ENCODE measurements at regions of chr4 and their contacts with region 1.

Region 1: DNA sequence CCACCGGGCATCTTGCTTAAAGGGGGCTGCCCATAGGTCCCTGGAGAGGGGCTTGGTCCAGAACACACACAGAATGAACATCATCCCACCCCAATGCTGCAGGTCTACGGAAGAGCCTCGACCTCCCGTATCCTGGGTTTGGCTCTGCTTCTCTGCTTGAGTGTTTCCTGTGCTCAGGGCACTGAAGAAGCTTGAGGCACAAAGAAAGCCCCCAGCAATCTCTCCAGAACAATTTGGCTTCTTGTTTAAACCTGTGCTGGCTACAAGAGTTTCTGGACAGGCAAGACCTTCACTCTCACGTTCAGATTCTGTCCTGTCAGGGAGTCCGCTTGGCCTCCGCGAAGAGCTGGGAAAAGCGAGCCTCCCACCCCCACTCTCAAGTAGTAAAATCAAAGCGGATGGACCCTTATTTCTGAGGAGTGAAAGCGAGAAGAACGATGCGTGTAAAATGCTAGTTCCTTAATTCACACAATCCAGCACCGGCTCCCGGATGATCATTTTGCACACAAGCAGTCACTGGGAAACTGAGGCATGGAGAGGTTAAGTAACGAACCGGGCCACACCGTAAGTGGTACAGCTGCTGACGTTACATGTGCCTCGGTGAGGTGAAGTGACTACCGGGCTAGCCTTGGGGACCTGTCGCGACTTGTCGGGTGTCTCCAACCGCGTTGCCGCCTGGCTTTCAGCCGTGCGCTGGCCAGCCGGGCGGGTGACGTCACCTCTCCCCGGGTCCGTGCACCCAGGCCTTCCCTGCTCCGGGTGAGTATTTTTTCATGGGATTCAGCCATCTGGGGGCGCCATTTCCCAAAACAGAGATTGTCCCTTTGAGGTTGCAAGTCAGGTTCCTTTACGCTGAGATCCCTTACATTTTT is 3.1 kb upstream of the SFRP2 start:
- DNase-seq: peak; percentile 84
- H3K4me3 ChIP-seq: peak overlapping the region; percentile 13 to 44 (median 34)
- H3K27ac ChIP-seq: no peak overlapping the region
- H3K4me1 ChIP-seq: peaks cover 0 to 45% (median 38%) of the 10 kb centered on the region in 4 donors
- H3K27me3 ChIP-seq: peaks cover 40 to 69% (median 55%) of the 10 kb centered on the region in 3 donors
- CTCF ChIP-seq: no peak
- EP300 ChIP-seq: no peak
- POLR2A ChIP-seq: no peak

Region 2: GRCh38 chr4:154004507-154005170 is 212.7 kb after region 1 on chr4:
- intact Hi-C with region 1: loop called (anchors 10 kb)
- DNase-seq: peak; percentile 85
- H3K4me3 ChIP-seq: no peak overlapping the region
- H3K27ac ChIP-seq: peak overlapping the region; percentile 46 to 65 (median 52)
- H3K4me1 ChIP-seq: peaks cover 0 to 9% (median 9%) of the 10 kb centered on the region in 4 donors
- H3K27me3 ChIP-seq: no peaks in the 10 kb centered on the region
- CTCF ChIP-seq: no peak
- EP300 ChIP-seq: no peak
- POLR2A ChIP-seq: no peak

Region 3: GRCh38 chr4:154124539-154125255 is 332.7 kb after region 1 on chr4:
- intact Hi-C with region 1: no loop called
- DNase-seq: no peak
- H3K4me3 ChIP-seq: no peak overlapping the region
- H3K27ac ChIP-seq: no peak overlapping the region
- H3K4me1 ChIP-seq: no peaks in the 10 kb centered on the region
- H3K27me3 ChIP-seq: no peaks in the 10 kb centered on the region
- CTCF ChIP-seq: no peak
- EP300 ChIP-seq: no peak
- POLR2A ChIP-seq: no peak